GM10248 (cell line): ENCODE measurements at regions of chr17 and their contacts with region 1.

Region 1: GRCh38 chr17:49401971-49402611 is 12.6 kb downstream of the PHB1 start:
- DNase-seq: no peak
- CTCF ChIP-seq: no peak

Region 2: DNA sequence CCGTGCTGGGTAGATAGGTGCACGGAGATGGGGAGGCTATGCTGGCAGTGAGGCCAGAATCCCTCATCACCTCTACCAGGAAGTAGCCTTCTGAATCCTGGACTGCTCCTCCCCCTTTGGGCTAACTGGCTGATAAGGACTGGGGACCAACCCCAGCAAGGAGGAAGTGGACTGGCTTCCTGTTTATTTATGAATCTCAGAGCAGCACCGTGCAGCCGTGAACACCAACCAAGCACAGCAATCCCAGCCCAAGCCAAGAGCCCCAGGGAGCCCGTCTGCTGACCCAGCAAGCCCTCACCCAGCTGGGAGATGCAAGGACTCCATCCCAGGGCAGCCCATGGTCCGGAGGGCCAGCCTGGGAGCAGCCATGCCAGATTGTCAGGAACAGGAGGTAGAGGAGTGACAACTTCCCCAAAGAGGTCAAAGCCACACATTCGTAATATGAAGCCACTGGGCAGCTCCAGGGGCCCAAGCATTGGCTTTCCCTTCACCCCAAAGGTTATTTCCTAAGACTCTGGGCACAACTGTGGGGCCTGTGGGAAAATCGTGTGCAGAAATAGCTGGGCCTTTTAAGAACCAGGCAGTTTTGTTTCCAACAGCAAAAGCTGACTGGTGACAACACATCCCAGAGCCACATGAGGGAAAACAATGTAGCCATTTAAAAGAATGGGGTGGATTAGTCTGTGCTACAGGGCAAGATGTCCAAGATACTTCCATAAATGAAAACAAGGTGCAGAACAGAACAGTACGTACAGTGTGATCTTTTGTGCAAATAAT is 11.4 kb before region 1 on chr17:
- CTCF ChIA-PET with region 1: interaction called, 16 read pairs
- POLR2A ChIA-PET with region 1: no interaction called
- DNase-seq: peak; percentile 60
- CTCF ChIP-seq: no peak